ENCODE measurements at regions of chr1 and their contacts with region 1.

Region 1: DNA sequence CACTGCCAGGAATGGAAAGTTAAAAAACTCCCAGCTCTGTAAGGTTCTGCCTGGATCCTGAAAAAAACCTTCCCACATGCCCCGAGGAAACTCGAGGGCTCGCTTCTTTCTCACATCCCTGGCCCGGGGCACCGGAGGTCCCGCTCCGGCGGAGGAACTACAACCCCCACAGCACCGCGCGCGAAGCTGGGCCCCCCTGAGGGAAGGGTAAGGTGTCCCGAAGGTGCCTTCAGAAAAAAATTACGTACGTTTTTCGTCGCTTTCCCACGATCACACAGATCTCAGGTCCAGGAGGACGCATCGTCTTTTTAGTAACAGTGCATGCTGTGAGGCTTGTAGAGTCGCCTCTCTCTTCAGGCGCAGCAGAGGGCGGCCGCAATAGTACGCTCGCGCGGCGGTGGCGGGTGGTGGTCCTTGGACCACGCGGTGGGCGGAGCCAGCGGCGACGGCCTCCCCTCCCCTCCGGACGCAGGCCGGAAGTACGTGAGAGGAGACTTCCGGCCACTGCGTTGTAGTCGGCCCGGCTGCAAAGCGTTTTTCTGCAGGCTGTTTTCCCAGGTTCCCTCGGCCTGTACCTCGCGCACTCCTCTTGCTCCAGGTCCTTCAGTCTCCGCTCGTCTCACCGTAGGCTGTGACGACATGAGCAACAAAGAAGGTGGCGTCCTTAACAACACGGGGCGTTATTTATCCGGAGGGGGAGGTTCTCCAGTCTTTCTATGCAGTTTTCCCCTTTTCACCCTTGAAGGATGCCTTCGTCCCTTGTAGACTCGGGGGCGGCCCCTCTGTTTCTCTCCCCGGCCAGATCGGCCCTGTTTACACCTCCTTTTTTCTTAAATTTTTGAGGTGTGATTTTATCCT is at the start of gene TSNAX:
- DNase-seq: peak; percentile 97
- H3K4me3 ChIP-seq: peak within 1 kb of the TSS; percentile 35 to 75 (median 45)
- H3K27ac ChIP-seq: peak within 1 kb of the TSS; percentile 86
- H3K4me1 ChIP-seq: peaks cover 15% of the 10 kb centered on the region
- H3K27me3 ChIP-seq: no peaks in the 10 kb centered on the region
- CTCF ChIP-seq: no peak
- POLR2A ChIP-seq: peak; percentile 94
- total RNA-seq, gene TSNAX: 26.3 and 26.4 TPM in 2 replicates

Region 2: GRCh38 chr1:230867903-230868735 is 660.3 kb before region 1 on chr1 and contains the start of gene C1orf198:
- CTCF ChIA-PET with region 1: no interaction called
- POLR2A ChIA-PET with region 1: no interaction called
- dilution Hi-C with region 1: no loop called
- intact Hi-C with region 1: loop called (anchors 2 kb)
- DNase-seq: peak; percentile 60
- H3K4me3 ChIP-seq: peak within 1 kb of the TSS; percentile 70 to 93 (median 83)
- H3K27ac ChIP-seq: peak within 1 kb of the TSS; percentile 33
- H3K4me1 ChIP-seq: peaks cover 20% of the 10 kb centered on the region
- H3K27me3 ChIP-seq: no peaks in the 10 kb centered on the region
- CTCF ChIP-seq: no peak
- POLR2A ChIP-seq: peak; percentile 65
- total RNA-seq, gene C1orf198: 27.7 and 29.2 TPM in 2 replicates

Region 3: GRCh38 chr1:231351816-231352215 is 176.6 kb before region 1 on chr1:
- CTCF ChIA-PET with region 1: no interaction called
- POLR2A ChIA-PET with region 1: no interaction called
- dilution Hi-C with region 1: no loop called
- intact Hi-C with region 1: loop called (anchors 1 kb)
- DNase-seq: peak; percentile 92
- H3K4me3 ChIP-seq: no peak overlapping the region
- H3K27ac ChIP-seq: peak overlapping the region; percentile 81
- H3K4me1 ChIP-seq: peaks cover 18% of the 10 kb centered on the region
- H3K27me3 ChIP-seq: no peaks in the 10 kb centered on the region
- CTCF ChIP-seq: no peak
- POLR2A ChIP-seq: no peak

Region 4: DNA sequence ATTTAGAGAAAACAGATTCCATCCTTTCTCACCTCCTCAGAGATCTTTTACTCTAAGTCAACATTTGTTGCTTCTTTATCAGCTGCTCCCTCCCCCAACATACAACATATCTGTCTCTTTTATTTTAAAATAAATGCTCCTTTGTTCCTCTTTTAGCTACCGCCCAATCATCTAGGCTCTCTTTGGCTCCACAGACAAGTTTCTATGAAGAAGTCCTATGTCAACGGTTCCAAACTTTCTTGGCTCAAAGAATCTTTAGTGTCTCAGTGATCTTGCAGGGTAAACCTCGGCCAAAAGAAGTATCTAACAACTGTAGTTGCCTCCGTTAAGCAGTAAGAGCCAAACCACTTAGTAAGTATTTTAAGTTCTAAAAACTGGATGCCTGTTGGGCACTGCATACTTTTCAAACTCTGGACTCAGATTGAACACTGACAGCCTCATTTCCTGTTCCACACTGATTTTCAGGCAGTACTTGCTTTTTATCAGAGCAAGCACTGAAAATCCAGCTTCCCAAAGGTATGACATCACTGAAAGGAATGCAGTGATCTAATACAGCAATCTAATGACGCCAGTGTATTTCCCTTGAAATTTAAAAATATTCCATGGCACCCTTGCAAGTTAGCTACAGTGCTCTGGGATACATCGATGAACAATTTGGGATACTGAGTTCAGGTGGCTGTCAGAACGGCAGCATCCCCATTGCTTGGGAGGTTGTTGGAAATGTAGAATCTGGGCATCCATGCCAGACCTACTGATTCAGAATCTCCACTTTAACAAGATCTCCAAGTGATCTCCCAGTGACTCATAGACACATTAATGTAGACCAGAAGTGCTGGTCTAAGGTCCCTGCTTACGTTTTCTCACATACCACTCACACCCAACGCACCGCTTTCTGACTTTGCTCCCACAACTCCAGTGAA is 133.1 kb before region 1 on chr1:
- CTCF ChIA-PET with region 1: no interaction called
- POLR2A ChIA-PET with region 1: no interaction called
- dilution Hi-C with region 1: no loop called
- intact Hi-C with region 1: loop called (anchors 1 kb)
- DNase-seq: peak; percentile 93
- H3K4me3 ChIP-seq: peak overlapping the region in 1 of 3 experiments; percentile 18
- H3K27ac ChIP-seq: peak overlapping the region; percentile 100
- H3K4me1 ChIP-seq: peaks cover 47% of the 10 kb centered on the region
- H3K27me3 ChIP-seq: no peaks in the 10 kb centered on the region
- CTCF ChIP-seq: no peak
- POLR2A ChIP-seq: peak; percentile 51

Region 5: DNA sequence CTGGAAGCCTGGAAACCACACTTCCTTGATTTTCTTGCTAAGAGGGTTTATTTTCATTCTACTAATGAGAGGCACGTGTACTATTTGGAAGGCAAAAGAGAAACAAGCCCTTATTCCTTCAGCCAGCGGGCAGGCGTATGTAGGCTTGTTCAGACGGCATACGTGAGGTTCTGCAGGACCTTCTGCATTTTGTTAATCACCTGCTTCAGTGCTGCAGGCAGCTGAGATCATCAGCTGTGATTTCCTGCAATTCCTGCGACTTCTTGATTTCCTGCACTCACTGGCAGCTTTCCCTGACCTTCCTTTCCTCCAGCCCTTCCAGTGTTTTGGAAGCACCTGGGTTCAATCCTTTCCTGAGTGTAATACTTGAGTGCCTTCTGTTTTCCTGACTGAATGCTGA is 43.5 kb after region 1 on chr1:
- CTCF ChIA-PET with region 1: no interaction called
- POLR2A ChIA-PET with region 1: no interaction called
- dilution Hi-C with region 1: no loop called
- intact Hi-C with region 1: loop called (anchors 1 kb)
- DNase-seq: peak; percentile 94
- H3K4me3 ChIP-seq: peak overlapping the region in 1 of 3 experiments; percentile 1
- H3K27ac ChIP-seq: peak overlapping the region; percentile 22
- H3K4me1 ChIP-seq: peaks cover 12% of the 10 kb centered on the region
- H3K27me3 ChIP-seq: no peaks in the 10 kb centered on the region
- CTCF ChIP-seq: no peak
- POLR2A ChIP-seq: no peak

Region 6: GRCh38 chr1:231584124-231584523 is 55.7 kb after region 1 on chr1:
- CTCF ChIA-PET with region 1: interaction called, 5 read pairs
- POLR2A ChIA-PET with region 1: no interaction called
- dilution Hi-C with region 1: no loop called
- intact Hi-C with region 1: loop called (anchors 1 kb)
- DNase-seq: peak; percentile 88
- H3K4me3 ChIP-seq: no peak overlapping the region
- H3K27ac ChIP-seq: peak overlapping the region; percentile 47
- H3K4me1 ChIP-seq: peaks cover 8% of the 10 kb centered on the region
- H3K27me3 ChIP-seq: no peaks in the 10 kb centered on the region
- CTCF ChIP-seq: peak in 1 of 2 donors; percentile 20
- POLR2A ChIP-seq: no peak